ENCODE measurements at regions of chr11 and their contacts with region 1.

Region 1: DNA sequence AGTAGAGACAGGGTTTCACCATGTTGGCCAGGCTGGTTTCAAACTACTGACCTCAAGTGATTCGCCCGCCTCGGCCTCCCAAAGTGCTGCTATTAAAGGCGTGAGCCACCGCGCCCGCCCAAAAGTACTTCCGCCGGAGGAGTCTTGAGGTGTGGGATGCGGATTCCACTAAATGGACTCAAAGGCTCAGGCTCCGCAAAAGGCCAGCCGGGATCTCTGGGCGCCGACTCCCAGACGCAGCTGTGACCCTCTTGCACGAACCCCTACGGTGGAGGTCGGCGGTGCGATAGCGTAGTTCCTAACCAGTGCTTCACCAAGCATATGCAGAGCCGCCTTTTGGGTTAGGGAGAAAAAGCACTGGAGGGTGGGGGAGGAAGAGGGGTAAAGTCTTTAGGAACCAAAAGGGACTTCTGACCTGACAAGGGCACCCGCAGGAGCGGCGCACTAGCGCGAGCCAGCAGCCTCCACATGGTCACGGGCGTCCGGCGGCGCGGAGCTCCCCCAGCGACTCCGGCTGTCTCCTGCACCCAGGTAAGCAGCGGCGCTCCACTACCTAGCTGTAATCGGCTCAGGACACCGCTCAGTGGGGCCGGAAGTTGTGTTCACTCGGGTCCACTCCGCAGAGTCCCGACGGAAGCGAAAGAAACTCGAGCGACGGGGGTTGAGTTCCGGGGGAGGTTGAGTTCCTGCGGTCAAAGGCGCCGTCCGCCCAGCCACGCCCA is at the start of gene MRPL16:
- DNase-seq: peak; percentile 87 to 96 (median 88)
- ATAC-seq: peak; percentile 98
- H3K4me3 ChIP-seq: peak within 1 kb of the TSS; percentile 98
- H3K27ac ChIP-seq: peak within 1 kb of the TSS; percentile 94
- H3K4me1 ChIP-seq: peaks cover 7 to 15% of the 10 kb centered on the region in 2 experiments; a peak in 4 of 5 replicates
- H3K27me3 ChIP-seq: no peaks in the 10 kb centered on the region
- CTCF ChIP-seq: peak; percentile 46 to 78 (median 47); a peak in 5 of 6 replicates
- EP300 ChIP-seq: peak; percentile 43
- POLR2A ChIP-seq: peak; percentile 92
- RAD21 ChIP-seq: peak; percentile 49 to 57
- polyA plus RNA-seq, gene MRPL16: 63.3 to 99.3 TPM

Region 2: GRCh38 chr11:59719556-59719955 is 90.8 kb before region 1 on chr11:
- CTCF ChIA-PET with region 1: no interaction called
- POLR2A ChIA-PET with region 1: no interaction called
- in situ Hi-C with region 1: no loop called
- intact Hi-C with region 1: no loop called
- DNase-seq: no peak
- ATAC-seq: no peak
- H3K4me3 ChIP-seq: no peak overlapping the region
- H3K27ac ChIP-seq: no peak overlapping the region
- H3K4me1 ChIP-seq: peaks cover 0 to 10% of the 10 kb centered on the region in 2 experiments; a peak in 2 of 5 replicates
- H3K27me3 ChIP-seq: no peaks in the 10 kb centered on the region; a peak in 1 of 5 replicates
- CTCF ChIP-seq: no peak
- EP300 ChIP-seq: no peak
- POLR2A ChIP-seq: no peak
- RAD21 ChIP-seq: no peak

Region 3: GRCh38 chr11:59729834-59730233 is 80.5 kb before region 1 on chr11:
- CTCF ChIA-PET with region 1: no interaction called
- POLR2A ChIA-PET with region 1: no interaction called
- in situ Hi-C with region 1: no loop called
- intact Hi-C with region 1: no loop called
- DNase-seq: no peak
- ATAC-seq: no peak
- H3K4me3 ChIP-seq: no peak overlapping the region
- H3K27ac ChIP-seq: no peak overlapping the region
- H3K4me1 ChIP-seq: no peaks in the 10 kb centered on the region; a peak in 1 of 5 replicates
- H3K27me3 ChIP-seq: no peaks in the 10 kb centered on the region
- CTCF ChIP-seq: no peak
- EP300 ChIP-seq: no peak
- POLR2A ChIP-seq: no peak
- RAD21 ChIP-seq: no peak

Region 4: GRCh38 chr11:60334005-60334620 is 523.8 kb after region 1 on chr11:
- CTCF ChIA-PET with region 1: no interaction called
- POLR2A ChIA-PET with region 1: no interaction called
- in situ Hi-C with region 1: no loop called
- intact Hi-C with region 1: loop called (anchors 10 kb)
- DNase-seq: peak; percentile 58 to 74 (median 62)
- ATAC-seq: peak; percentile 87
- H3K4me3 ChIP-seq: no peak overlapping the region
- H3K27ac ChIP-seq: no peak overlapping the region
- H3K4me1 ChIP-seq: no peaks in the 10 kb centered on the region; a peak in 1 of 5 replicates
- H3K27me3 ChIP-seq: no peaks in the 10 kb centered on the region
- CTCF ChIP-seq: peak; percentile 72 to 75 (median 72)
- EP300 ChIP-seq: no peak
- POLR2A ChIP-seq: no peak
- RAD21 ChIP-seq: peak; percentile 16 to 42; a peak in 2 of 4 replicates

Measured in K562 (cell line).